Naive thymus-derived CD4-positive, alpha-beta T cell (primary cell): ENCODE measurements at regions of chr4 and their contacts with region 1.

Region 1: GRCh38 chr4:108620101-108620932 is at the start of gene RPL34:
- DNase-seq: peak; percentile 85 to 99 (median 96)
- ATAC-seq: peak; percentile 100
- H3K4me3 ChIP-seq: peak within 1 kb of the TSS; percentile 98
- H3K4me3 Mint-ChIP-seq: peak within 1 kb of the TSS; percentile 87 to 99 (median 96)
- H3K27ac ChIP-seq: peak within 1 kb of the TSS; percentile 90
- H3K27ac Mint-ChIP-seq: peak within 1 kb of the TSS; percentile 95 to 99 (median 97)
- H3K4me1 ChIP-seq: peaks cover 29 to 30% of the 10 kb centered on the region in 2 donors
- H3K4me1 Mint-ChIP-seq: peaks cover 33 to 81% (median 66%) of the 10 kb centered on the region in 7 donors
- H3K27me3 ChIP-seq: no peaks in the 10 kb centered on the region
- H3K27me3 Mint-ChIP-seq: peaks cover 0 to 3% (median 0%) of the 10 kb centered on the region in 5 donors
- total RNA-seq, gene RPL34: 1,411 to 3,442 (median 3,215) TPM

Region 2: GRCh38 chr4:107930821-107931774 is 689.2 kb before region 1 on chr4 and contains the start of gene CYP2U1:
- CTCF ChIA-PET with region 1: no interaction called
- POLR2A ChIA-PET with region 1: no interaction called
- intact Hi-C with region 1: loop called in 1 of 2 experiments (anchors 1 kb)
- DNase-seq: peak; percentile 74 to 84 (median 81)
- ATAC-seq: peak; percentile 96
- H3K4me3 ChIP-seq: peak within 1 kb of the TSS; percentile 86
- H3K4me3 Mint-ChIP-seq: peak within 1 kb of the TSS; percentile 90 to 98 (median 92)
- H3K27ac ChIP-seq: peak within 1 kb of the TSS; percentile 71
- H3K27ac Mint-ChIP-seq: peak within 1 kb of the TSS; percentile 65 to 98 (median 88)
- H3K4me1 ChIP-seq: peaks cover 8 to 12% of the 10 kb centered on the region in 2 donors
- H3K4me1 Mint-ChIP-seq: peaks cover 21 to 50% (median 35%) of the 10 kb centered on the region in 7 donors
- H3K27me3 ChIP-seq: no peaks in the 10 kb centered on the region
- H3K27me3 Mint-ChIP-seq: peaks cover 0 to 17% (median 0%) of the 10 kb centered on the region in 5 donors
- total RNA-seq, gene CYP2U1: 3.8 to 11.4 (median 5.8) TPM

Region 3: GRCh38 chr4:108502356-108502755 is 118.0 kb before region 1 on chr4:
- CTCF ChIA-PET with region 1: no interaction called
- POLR2A ChIA-PET with region 1: no interaction called
- intact Hi-C with region 1: no loop called
- DNase-seq: no peak
- ATAC-seq: no peak
- H3K4me3 ChIP-seq: no peak overlapping the region
- H3K4me3 Mint-ChIP-seq: no peak overlapping the region
- H3K27ac ChIP-seq: no peak overlapping the region
- H3K27ac Mint-ChIP-seq: peak overlapping the region in 1 of 9 donors; percentile 21
- H3K4me1 ChIP-seq: no peaks in the 10 kb centered on the region
- H3K4me1 Mint-ChIP-seq: peaks cover 3 to 42% (median 14%) of the 10 kb centered on the region in 7 donors
- H3K27me3 ChIP-seq: no peaks in the 10 kb centered on the region
- H3K27me3 Mint-ChIP-seq: no peaks in the 10 kb centered on the region

Region 4: GRCh38 chr4:108693819-108694218 is 73.5 kb after region 1 on chr4:
- CTCF ChIA-PET with region 1: no interaction called
- POLR2A ChIA-PET with region 1: no interaction called
- intact Hi-C with region 1: no loop called
- DNase-seq: no peak
- ATAC-seq: no peak
- H3K4me3 ChIP-seq: no peak overlapping the region
- H3K4me3 Mint-ChIP-seq: no peak overlapping the region
- H3K27ac ChIP-seq: no peak overlapping the region
- H3K27ac Mint-ChIP-seq: no peak overlapping the region
- H3K4me1 ChIP-seq: no peaks in the 10 kb centered on the region
- H3K4me1 Mint-ChIP-seq: peaks cover 0 to 2% (median 0%) of the 10 kb centered on the region in 7 donors
- H3K27me3 ChIP-seq: no peaks in the 10 kb centered on the region
- H3K27me3 Mint-ChIP-seq: peaks cover 0 to 5% (median 0%) of the 10 kb centered on the region in 5 donors